PC-9 (cell line): ENCODE measurements at regions of chr2 and their contacts with region 1.

Region 1: DNA sequence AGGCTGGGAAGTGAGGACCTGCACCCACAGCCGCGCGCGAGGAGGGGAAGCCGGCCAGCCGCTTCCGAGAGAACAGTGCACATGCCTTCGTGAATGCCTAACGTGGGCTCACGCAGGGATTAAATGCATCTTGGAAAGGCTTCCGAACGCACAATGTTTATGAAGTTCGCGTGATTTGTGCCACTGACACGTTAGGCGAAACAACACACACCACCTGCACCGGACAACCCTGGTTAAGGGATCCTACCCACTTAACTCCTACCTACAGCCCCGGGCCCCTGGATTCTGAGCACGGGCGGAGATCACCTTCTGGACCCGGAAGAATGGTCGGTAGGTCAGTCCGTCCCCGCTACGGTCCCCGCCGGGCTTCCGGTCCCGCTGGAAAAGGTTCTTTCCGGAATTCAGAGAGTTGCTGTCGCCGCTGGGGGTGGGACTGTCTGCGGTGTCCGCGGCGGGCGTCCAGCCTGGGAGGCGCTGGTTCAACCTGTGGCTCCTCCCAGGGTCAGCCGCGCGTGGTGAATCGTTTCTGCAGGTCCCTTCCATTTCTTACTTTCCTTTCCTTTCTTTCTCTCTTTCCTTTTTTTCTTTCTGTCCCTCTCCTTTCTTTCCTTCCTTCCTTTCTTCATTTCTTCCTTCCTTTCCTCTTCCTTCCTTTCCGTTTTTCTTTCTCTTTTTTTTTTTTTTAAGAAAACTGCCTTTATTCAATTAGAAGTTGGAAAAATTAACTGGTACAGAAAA is at the start of gene MTIF2:
- DNase-seq: peak; percentile 93 to 98
- H3K4me3 ChIP-seq: peak within 1 kb of the TSS; percentile 85
- H3K27ac ChIP-seq: peak within 1 kb of the TSS; percentile 64
- H3K4me1 ChIP-seq: peaks cover 14% of the 10 kb centered on the region
- H3K27me3 ChIP-seq: no peaks in the 10 kb centered on the region
- CTCF ChIP-seq: no peak
- total RNA-seq, gene MTIF2: 44.6 and 52.0 TPM in 2 replicates

Region 2: DNA sequence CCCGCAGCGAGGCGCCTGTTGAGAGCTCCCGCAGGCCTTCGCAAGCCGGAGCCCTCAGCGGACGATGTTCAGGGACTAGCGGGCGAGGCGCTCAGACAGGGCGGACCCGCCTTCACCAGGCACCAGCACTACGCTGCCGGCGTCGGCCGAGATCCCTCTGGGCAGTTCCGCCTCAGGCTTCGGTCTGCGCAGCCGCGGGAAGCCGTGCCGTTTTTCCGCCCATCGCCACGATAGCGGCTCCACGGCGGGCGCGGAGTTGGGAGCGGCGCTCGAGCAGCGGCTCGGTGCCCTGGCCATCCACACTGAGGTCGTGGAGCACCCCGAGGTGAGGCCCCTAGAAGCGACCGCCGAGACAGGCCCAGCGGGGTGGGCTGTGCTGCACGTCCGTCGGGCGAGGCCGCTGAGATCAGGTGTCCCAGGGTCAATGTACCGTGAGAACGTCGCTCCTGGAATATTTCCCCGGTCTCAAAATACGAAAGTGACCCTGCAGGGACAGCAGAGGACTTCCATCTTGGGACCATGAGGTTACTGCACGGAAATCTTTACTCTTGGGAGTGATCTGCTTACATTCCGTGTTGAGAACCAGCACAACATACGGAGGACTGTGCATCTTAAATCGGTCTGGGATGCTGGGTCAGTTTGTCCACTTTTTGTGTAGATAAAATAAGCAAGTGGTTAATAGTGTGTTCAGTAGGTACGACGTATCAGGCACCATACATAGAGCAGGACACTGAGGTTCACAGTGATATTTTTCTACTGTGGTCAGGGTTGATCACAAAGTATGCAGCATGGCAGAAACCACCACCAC is 13.2 kb after region 1 on chr2:
- CTCF ChIA-PET with region 1: no interaction called
- POLR2A ChIA-PET with region 1: no interaction called
- intact Hi-C with region 1: loop called (anchors 1 kb)
- DNase-seq: peak; percentile 77 to 90
- H3K4me3 ChIP-seq: peak overlapping the region; percentile 80
- H3K27ac ChIP-seq: peak overlapping the region; percentile 40
- H3K4me1 ChIP-seq: peaks cover 12% of the 10 kb centered on the region; the same call in 1 of the 2 replicates
- H3K27me3 ChIP-seq: no peaks in the 10 kb centered on the region
- CTCF ChIP-seq: no peak

Region 3: GRCh38 chr2:55511508-55512124 is 242.5 kb after region 1 on chr2:
- CTCF ChIA-PET with region 1: no interaction called
- POLR2A ChIA-PET with region 1: no interaction called
- intact Hi-C with region 1: loop called (anchors 1 kb)
- DNase-seq: peak in 1 of 2 experiments; percentile 10
- H3K4me3 ChIP-seq: no peak overlapping the region
- H3K27ac ChIP-seq: no peak overlapping the region
- H3K4me1 ChIP-seq: no peaks in the 10 kb centered on the region
- H3K27me3 ChIP-seq: no peaks in the 10 kb centered on the region
- CTCF ChIP-seq: peak; percentile 72

Region 4: GRCh38 chr2:55617175-55618024 is 348.3 kb after region 1 on chr2 and contains the start of gene PPP4R3B:
- CTCF ChIA-PET with region 1: no interaction called
- POLR2A ChIA-PET with region 1: no interaction called
- intact Hi-C with region 1: loop called (anchors 2 kb)
- DNase-seq: peak; percentile 100
- H3K4me3 ChIP-seq: peak within 1 kb of the TSS; percentile 100
- H3K27ac ChIP-seq: peak within 1 kb of the TSS; percentile 90
- H3K4me1 ChIP-seq: peaks cover 23% of the 10 kb centered on the region
- H3K27me3 ChIP-seq: no peaks in the 10 kb centered on the region
- CTCF ChIP-seq: peak; percentile 48; the same call in 1 of the 2 replicates
- total RNA-seq, gene PPP4R3B: 66.2 and 73.4 TPM in 2 replicates